ENCODE measurements at regions of chr13 and their contacts with region 1.

Region 1: GRCh38 chr13:23888658-23889614 is at the start of gene MIPEP:
- DNase-seq: peak; percentile 84
- ATAC-seq: peak; percentile 93
- H3K4me3 Mint-ChIP-seq: peak within 1 kb of the TSS; percentile 91
- H3K27ac Mint-ChIP-seq: peak within 1 kb of the TSS; percentile 71
- H3K4me1 Mint-ChIP-seq: peaks cover 27% of the 10 kb centered on the region
- H3K27me3 Mint-ChIP-seq: no peaks in the 10 kb centered on the region
- CTCF ChIP-seq: no peak
- total RNA-seq, gene MIPEP: 19.7 and 19.9 TPM in 2 replicates

Region 2: GRCh38 chr13:23466144-23467002 is 422.6 kb before region 1 on chr13:
- CTCF ChIA-PET with region 1: interaction called, 3 read pairs
- POLR2A ChIA-PET with region 1: no interaction called
- intact Hi-C with region 1: loop called (anchors 5 kb)
- DNase-seq: peak; percentile 51
- ATAC-seq: peak; percentile 88
- H3K4me3 Mint-ChIP-seq: peak overlapping the region; percentile 79
- H3K27ac Mint-ChIP-seq: no peak overlapping the region
- H3K4me1 Mint-ChIP-seq: peaks cover 8% of the 10 kb centered on the region
- H3K27me3 Mint-ChIP-seq: peaks cover 19% of the 10 kb centered on the region
- CTCF ChIP-seq: no peak

Region 3: DNA sequence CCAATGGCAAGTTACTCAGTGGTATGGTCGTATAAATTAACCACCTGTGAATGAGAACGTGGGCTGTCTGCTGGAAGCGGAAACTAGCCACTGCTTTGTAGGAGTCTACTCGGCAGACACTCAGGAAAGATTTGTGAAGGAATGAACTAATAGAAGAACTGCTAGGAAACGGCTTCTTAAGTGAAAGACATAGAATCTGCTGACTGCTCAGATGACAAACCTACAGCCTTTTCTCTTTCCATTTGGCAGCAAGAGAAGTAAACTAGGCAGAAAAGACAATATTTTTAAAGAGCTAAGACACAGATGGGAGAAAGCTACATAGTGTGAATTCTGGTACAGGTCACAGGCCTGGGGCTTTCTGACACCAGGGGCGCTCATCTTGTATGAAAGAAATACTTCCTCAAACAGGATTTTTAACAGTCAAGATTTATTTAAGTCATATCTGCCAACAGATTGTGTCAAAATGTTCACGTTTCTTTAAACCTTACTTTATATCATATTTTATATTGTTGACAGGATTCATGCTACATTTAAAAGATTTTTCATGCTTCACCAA is 78.2 kb before region 1 on chr13:
- CTCF ChIA-PET with region 1: interaction called, 3 read pairs
- POLR2A ChIA-PET with region 1: no interaction called
- intact Hi-C with region 1: loop called (anchors 5 kb)
- DNase-seq: no peak
- ATAC-seq: peak; percentile 68
- H3K4me3 Mint-ChIP-seq: peak overlapping the region; percentile 20
- H3K27ac Mint-ChIP-seq: no peak overlapping the region
- H3K4me1 Mint-ChIP-seq: peaks cover 53% of the 10 kb centered on the region
- H3K27me3 Mint-ChIP-seq: no peaks in the 10 kb centered on the region
- CTCF ChIP-seq: no peak

Region 4: GRCh38 chr13:24270639-24271141 is 381.8 kb after region 1 on chr13:
- CTCF ChIA-PET with region 1: no interaction called
- POLR2A ChIA-PET with region 1: no interaction called
- intact Hi-C with region 1: loop called (anchors 5 kb)
- DNase-seq: no peak
- ATAC-seq: peak; percentile 55
- H3K4me3 Mint-ChIP-seq: peak overlapping the region; percentile 87
- H3K27ac Mint-ChIP-seq: peak overlapping the region; percentile 95
- H3K4me1 Mint-ChIP-seq: peaks cover 76% of the 10 kb centered on the region
- H3K27me3 Mint-ChIP-seq: no peaks in the 10 kb centered on the region
- CTCF ChIP-seq: no peak

Region 5: GRCh38 chr13:24922745-24923591 is 1034.0 kb after region 1 on chr13:
- CTCF ChIA-PET with region 1: no interaction called
- POLR2A ChIA-PET with region 1: no interaction called
- intact Hi-C with region 1: loop called (anchors 1 kb)
- DNase-seq: peak; percentile 91
- ATAC-seq: peak; percentile 97
- H3K4me3 Mint-ChIP-seq: peak overlapping the region; percentile 91
- H3K27ac Mint-ChIP-seq: peak overlapping the region; percentile 97
- H3K4me1 Mint-ChIP-seq: peaks cover 16% of the 10 kb centered on the region
- H3K27me3 Mint-ChIP-seq: no peaks in the 10 kb centered on the region
- CTCF ChIP-seq: no peak